Activated T-helper 1 cell treated with anti-CD3 and anti-CD28 coated beads, Interleukin-12 subunit alpha, Interleukin-12 subunit beta, Interleukin-2, Interleukin-4 antibody, amounts not matched to agents 30 ng/mL and 10 ng/mL and 1 ng/mL, durations not matched to agents 14 hours and 24 hours and 36 hours (primary cell): ENCODE measurements at regions of chr6 and their contacts with region 1.

Region 1: DNA sequence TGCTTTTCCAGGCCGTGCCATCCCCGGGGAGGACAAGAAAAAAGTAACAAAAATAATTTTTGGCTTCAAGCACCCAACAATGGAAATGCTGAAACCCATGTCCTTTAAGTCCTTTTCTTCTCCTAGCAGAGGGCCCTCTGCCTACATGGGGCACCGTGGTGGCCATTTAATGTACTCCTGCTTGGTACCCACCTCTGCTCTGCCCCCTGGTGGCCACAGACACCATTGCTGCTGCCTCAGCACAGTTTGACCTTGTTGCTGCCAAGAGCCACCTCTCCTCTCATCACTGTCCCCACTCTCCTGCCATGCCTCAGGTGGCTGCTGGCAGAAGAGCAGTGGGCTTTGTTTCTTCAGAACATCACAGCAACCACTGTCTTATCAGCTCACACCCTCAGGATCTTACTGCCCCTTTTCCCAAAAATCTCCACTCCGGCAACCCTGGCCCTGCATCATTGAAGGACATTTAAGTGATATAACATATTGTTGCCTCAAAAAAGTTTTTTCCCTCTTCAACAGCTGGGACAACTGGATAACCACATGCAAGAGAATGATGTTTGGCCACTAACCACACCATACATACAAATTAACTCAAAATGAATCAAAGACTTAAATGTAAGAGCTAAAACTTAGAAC is 12.9 kb upstream of the ARMC2 start:
- DNase-seq: peak; percentile 74
- H3K4me3 Mint-ChIP-seq: no peak overlapping the region
- H3K27ac Mint-ChIP-seq: no peak overlapping the region
- H3K4me1 Mint-ChIP-seq: peaks cover 32% of the 10 kb centered on the region
- H3K27me3 Mint-ChIP-seq: peaks cover 16% of the 10 kb centered on the region

Region 2: DNA sequence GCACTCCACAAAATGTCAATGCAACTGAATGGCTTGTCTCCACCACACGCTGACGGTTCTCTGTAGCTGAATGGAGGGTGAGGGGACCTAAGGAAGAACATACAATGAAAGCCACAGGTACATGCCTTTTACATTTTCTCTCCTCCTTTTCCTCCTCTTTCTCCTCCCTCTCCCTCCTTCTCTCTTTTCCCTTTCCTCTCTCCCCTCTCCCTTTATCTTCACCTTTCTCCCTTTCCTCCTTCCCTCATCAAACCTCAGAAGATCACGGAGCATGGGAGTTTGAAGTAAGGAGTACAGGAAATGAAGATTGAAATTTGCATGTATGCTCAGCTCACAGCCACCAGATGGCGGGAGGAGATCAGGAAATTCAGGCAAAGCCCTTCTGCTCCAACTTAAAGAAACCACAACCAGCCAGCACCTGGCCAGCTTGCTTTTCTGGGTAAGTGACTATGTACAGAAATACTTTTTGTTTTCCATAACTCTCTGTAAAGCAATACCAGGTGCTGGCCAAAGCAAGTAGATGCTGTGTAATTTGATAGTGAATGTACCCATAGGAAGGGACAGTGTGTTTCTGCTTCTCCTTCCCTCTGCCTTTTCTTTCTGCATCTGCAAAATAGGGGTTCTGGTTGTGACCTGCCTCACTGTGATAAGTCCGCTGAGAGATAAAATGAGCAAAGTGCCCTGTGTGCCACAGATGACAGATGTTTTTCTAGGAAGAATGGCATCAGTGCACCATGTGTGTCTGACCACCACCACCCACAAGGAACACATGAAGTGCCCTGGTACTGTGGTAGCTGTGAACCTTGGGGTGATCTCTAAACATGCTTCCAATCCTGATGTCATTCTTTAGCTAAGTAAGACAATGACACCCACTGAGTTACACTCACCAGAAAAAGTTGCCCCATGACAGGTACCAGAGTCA is 293.2 kb before region 1 on chr6:
- intact Hi-C with region 1: loop called (anchors 1 kb)
- DNase-seq: peak; percentile 52
- H3K4me3 Mint-ChIP-seq: no peak overlapping the region
- H3K27ac Mint-ChIP-seq: no peak overlapping the region
- H3K4me1 Mint-ChIP-seq: peaks cover 10% of the 10 kb centered on the region
- H3K27me3 Mint-ChIP-seq: peaks cover 39% of the 10 kb centered on the region

Region 3: DNA sequence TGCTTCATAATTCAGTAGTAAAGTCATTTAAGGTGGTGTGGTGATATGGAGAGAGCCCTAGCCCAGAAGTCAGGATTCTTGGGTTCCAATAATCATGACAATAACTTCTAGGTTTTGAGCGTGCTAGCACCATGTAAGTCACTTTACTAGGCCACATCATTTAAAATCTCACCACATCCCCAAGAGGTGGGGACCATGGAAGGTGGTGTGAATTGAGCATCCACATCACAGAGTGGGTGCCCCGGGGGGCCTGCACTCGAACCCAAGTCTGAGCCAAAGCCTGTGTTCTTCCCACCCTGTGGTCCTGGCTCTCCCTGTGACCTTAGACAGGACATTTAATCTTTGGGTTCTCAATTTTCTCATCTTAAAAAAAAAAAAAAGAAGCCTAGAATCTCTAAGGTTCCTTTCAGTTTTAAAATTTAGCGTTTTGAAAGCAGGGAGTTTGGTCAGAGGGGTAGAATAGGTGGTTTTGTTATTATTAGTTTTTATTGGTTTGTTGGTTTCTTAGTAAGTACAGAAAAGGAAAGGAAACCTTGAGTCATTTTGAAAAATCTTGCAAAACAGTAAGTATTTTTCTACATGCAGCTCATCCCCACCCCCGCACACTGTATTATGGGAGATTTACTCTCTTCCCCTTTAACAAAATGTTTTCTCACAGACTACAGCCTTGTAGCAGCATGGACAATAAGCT is 39.3 kb after region 1 on chr6:
- intact Hi-C with region 1: loop called (anchors 2 kb)
- DNase-seq: peak; percentile 51
- H3K4me3 Mint-ChIP-seq: peak overlapping the region; percentile 34
- H3K27ac Mint-ChIP-seq: peak overlapping the region; percentile 96
- H3K4me1 Mint-ChIP-seq: peaks cover 80% of the 10 kb centered on the region
- H3K27me3 Mint-ChIP-seq: peaks cover 4% of the 10 kb centered on the region